Posterior vena cava (tissue), 2 donors: ENCODE measurements at regions of chr12 and their contacts with region 1.

Region 1: GRCh38 chr12:91343010-91343409 is 160.4 kb upstream of the DCN start:
- DNase-seq: no peak

Region 2: GRCh38 chr12:89610366-89610765 is 1732.6 kb before region 1 on chr12:
- intact Hi-C with region 1: loop called in 1 of 2 experiments (anchors 5 kb)
- DNase-seq: no peak

Region 3: GRCh38 chr12:90245391-90245790 is 1097.6 kb before region 1 on chr12:
- intact Hi-C with region 1: no loop called
- DNase-seq: no peak